ENCODE measurements at regions of chr12 and their contacts with region 1.

Region 1: DNA sequence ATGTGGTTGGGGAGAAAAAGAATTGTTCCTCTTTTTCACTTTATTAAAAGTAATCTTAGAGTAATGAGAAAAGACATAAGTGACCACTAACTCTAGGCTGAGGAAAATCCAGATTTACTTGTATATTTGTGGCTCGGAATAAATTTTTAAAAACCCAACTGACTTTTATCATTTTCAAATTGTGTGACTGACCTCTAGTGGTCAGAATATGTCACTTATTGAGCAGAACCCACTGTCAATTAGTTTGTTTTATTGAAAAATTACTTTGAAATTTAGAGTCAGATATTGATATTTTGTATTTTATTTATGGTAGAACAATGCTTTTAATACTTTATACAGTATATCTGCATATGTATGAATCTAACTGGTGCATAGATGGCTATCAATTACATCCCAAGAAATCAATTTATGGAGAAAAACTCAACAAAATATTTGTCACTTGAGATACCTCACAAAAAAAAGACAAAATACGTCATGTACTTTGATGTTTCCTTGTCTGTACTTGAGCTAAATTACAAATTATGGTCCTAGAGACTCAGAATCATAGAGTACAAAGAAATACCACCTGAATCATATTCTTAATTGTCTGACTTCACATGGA is 229.4 kb downstream of the CNTN1 start:
- DNase-seq: peak; percentile 19
- ATAC-seq: 0 out of 2 replicates have a peak, but pooled peaks have one; percentile 35
- H3K4me3 ChIP-seq: no peak overlapping the region
- H3K27ac ChIP-seq: no peak overlapping the region
- H3K4me1 ChIP-seq: no peaks in the 10 kb centered on the region
- H3K27me3 ChIP-seq: no peaks in the 10 kb centered on the region
- CTCF ChIP-seq: peak; percentile 63
- POLR2A ChIP-seq: no peak
- RAD21 ChIP-seq: peak; percentile 45

Region 2: GRCh38 chr12:40152783-40153383 is 768.8 kb before region 1 on chr12:
- CTCF ChIA-PET with region 1: no interaction called
- POLR2A ChIA-PET with region 1: no interaction called
- dilution Hi-C with region 1: no loop called
- in situ Hi-C with region 1: no loop called
- intact Hi-C with region 1: loop called (anchors 1 kb)
- DNase-seq: peak; percentile 32
- ATAC-seq: no peak; the same call in 1 of the 2 replicates
- H3K4me3 ChIP-seq: no peak overlapping the region
- H3K27ac ChIP-seq: no peak overlapping the region
- H3K4me1 ChIP-seq: no peaks in the 10 kb centered on the region
- H3K27me3 ChIP-seq: no peaks in the 10 kb centered on the region
- CTCF ChIP-seq: peak; percentile 76
- POLR2A ChIP-seq: no peak
- RAD21 ChIP-seq: peak; percentile 60

Region 3: GRCh38 chr12:40622246-40622838 is 299.3 kb before region 1 on chr12:
- CTCF ChIA-PET with region 1: no interaction called
- POLR2A ChIA-PET with region 1: no interaction called
- dilution Hi-C with region 1: no loop called
- in situ Hi-C with region 1: loop called (anchors 10 kb)
- intact Hi-C with region 1: loop called (anchors 2 kb)
- DNase-seq: peak; percentile 43
- ATAC-seq: peak; percentile 32; the same call in 1 of the 2 replicates
- H3K4me3 ChIP-seq: no peak overlapping the region
- H3K27ac ChIP-seq: no peak overlapping the region
- H3K4me1 ChIP-seq: no peaks in the 10 kb centered on the region
- H3K27me3 ChIP-seq: no peaks in the 10 kb centered on the region
- CTCF ChIP-seq: peak; percentile 61
- POLR2A ChIP-seq: no peak
- RAD21 ChIP-seq: peak; percentile 43

Region 4: DNA sequence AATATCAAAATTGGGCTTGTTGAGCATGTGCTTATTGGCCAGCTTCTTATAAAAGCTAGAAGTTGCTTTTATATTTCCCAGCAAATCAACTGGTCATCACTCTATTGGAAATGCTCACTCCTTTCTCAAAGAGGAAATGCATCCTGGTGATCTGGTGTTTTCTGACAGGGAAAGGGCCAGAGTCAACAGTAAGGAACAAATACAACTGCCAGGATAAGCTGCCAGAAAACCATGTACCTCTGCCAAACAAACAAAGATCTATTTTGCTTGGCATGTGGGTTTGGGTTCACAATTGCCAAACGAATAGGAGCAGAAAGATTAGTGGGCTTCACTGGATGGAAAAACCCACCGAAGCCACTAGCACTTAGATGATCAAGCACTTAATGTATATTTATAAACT is 139.5 kb after region 1 on chr12:
- CTCF ChIA-PET with region 1: no interaction called
- POLR2A ChIA-PET with region 1: no interaction called
- dilution Hi-C with region 1: no loop called
- in situ Hi-C with region 1: no loop called
- intact Hi-C with region 1: no loop called
- DNase-seq: no peak
- ATAC-seq: no peak
- H3K4me3 ChIP-seq: no peak overlapping the region
- H3K27ac ChIP-seq: no peak overlapping the region
- H3K4me1 ChIP-seq: peaks cover 2% of the 10 kb centered on the region
- H3K27me3 ChIP-seq: no peaks in the 10 kb centered on the region
- CTCF ChIP-seq: no peak
- POLR2A ChIP-seq: no peak
- RAD21 ChIP-seq: no peak